ENCODE measurements at regions of chr2 and their contacts with region 1.

Region 1: GRCh38 chr2:224221455-224221913 is 180.4 kb downstream of the FAM124B start:
- DNase-seq: peak; percentile 94
- H3K4me3 ChIP-seq: no peak overlapping the region
- H3K27ac ChIP-seq: peak overlapping the region; percentile 90
- H3K4me1 ChIP-seq: peaks cover 34% of the 10 kb centered on the region
- H3K27me3 ChIP-seq: no peaks in the 10 kb centered on the region
- CTCF ChIP-seq: no peak

Region 2: GRCh38 chr2:224101820-224102630 is 119.5 kb before region 1 on chr2:
- CTCF ChIA-PET with region 1: no interaction called
- dilution Hi-C with region 1: no loop called
- in situ Hi-C with region 1: no loop called
- intact Hi-C with region 1: loop called (anchors 1 kb)
- DNase-seq: peak; percentile 94
- H3K4me3 ChIP-seq: no peak overlapping the region
- H3K27ac ChIP-seq: peak overlapping the region; percentile 54
- H3K4me1 ChIP-seq: peaks cover 45% of the 10 kb centered on the region
- H3K27me3 ChIP-seq: no peaks in the 10 kb centered on the region
- CTCF ChIP-seq: no peak

Region 3: GRCh38 chr2:224145751-224146355 is 75.6 kb before region 1 on chr2:
- CTCF ChIA-PET with region 1: no interaction called
- dilution Hi-C with region 1: no loop called
- in situ Hi-C with region 1: no loop called
- intact Hi-C with region 1: loop called (anchors 2 kb)
- DNase-seq: peak; percentile 84
- H3K4me3 ChIP-seq: no peak overlapping the region
- H3K27ac ChIP-seq: peak overlapping the region; percentile 64
- H3K4me1 ChIP-seq: peaks cover 46% of the 10 kb centered on the region
- H3K27me3 ChIP-seq: no peaks in the 10 kb centered on the region
- CTCF ChIP-seq: no peak

Region 4: DNA sequence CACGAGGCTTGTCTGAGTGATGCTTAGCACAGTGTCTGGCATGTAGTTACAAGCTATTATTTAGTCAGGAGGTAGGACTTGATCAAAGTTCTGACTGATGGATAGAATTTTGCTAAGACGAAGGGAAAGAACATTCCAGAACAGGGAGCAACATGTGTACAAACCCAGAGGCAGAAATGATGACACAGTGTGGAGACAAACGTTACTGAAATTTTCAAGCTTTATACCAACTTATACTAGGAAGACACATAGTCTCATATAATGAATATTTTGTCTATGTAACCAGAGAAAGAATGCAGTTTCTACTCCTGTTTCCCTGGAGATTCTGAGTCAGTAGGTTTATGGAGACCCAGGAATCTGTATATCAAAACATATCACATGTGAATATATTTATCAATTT is 57.0 kb after region 1 on chr2:
- CTCF ChIA-PET with region 1: no interaction called
- dilution Hi-C with region 1: no loop called
- in situ Hi-C with region 1: no loop called
- intact Hi-C with region 1: loop called (anchors 1 kb)
- DNase-seq: peak; percentile 78
- H3K4me3 ChIP-seq: no peak overlapping the region
- H3K27ac ChIP-seq: no peak overlapping the region
- H3K4me1 ChIP-seq: no peaks in the 10 kb centered on the region
- H3K27me3 ChIP-seq: no peaks in the 10 kb centered on the region
- CTCF ChIP-seq: peak in 1 of 2 donors; percentile 33